Posterior vena cava (tissue), 2 donors: ENCODE measurements at regions of chr5 and their contacts with region 1.

Region 1: DNA sequence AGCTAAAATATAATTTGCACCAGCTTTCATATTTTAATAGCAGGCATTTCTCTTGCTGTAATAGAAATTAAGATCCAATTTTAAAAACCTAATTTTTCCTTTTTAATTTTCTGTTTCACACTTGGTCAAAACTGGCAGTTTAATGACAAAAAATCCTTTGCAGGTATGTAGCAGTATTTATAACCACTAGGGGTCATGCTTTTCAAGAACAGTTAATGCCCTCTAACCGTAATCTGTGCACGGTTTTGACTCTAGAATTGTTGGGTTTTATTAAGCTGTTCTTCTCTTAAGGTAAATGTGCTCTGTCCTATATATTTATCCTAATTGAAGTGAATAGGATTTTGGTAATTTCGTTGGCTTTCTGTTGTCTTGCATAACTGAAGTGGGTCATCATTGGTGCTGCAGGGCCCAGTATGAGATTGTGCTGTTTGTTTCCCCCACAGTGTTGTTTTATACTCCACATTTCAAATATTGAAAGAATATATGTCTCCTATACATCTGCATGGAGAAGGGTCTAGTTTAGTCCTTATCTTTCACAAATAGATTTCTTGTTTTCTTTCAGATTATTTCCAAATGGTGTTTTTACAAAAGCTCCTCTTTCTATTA is 107.4 kb downstream of the SCAMP1 start:
- DNase-seq: no peak

Region 2: GRCh38 chr5:77282337-77283027 is 1185.4 kb before region 1 on chr5:
- intact Hi-C with region 1: no loop called
- DNase-seq: no peak

Region 3: DNA sequence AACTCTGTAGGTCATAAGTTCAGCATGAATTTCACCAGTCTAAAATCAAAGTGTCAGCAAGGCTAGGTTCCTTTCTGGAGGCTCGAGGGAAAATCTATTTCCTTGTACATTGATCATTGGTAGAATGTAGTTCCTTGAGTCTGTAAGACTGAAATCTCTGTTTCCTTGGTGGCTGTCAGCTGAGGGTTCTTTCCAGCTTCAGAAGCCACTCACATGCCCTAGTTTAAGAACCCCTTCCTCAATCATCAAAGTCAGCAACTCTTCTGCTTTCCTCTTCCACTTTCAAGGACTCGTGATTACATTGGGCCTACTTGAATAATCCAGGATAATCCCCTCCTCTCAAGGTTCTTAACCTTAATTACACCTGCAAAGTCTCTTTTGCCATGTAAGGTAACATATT is 112.3 kb before region 1 on chr5:
- intact Hi-C with region 1: no loop called
- DNase-seq: no peak

Region 4: GRCh38 chr5:78416677-78417425 is 51.0 kb before region 1 on chr5:
- intact Hi-C with region 1: no loop called
- DNase-seq: no peak

Region 5: DNA sequence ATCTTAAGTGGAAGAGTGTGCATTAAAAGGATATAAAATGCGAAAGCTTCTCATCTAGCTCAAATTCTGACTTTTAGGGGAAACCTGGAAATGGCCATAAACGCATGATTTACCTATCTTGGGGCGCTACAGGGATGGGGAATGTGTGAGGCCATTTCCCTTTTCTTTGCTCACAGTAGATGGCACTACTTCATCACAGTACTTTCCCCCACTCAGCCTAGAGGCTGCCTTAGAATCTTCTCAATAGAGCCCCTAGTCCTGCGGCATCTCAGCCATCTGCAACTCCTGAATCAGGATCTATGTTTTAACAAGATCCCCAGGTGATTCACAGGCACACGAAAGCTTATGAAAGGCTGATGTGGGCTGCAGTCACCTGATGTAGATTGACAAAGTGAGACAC is 70.0 kb after region 1 on chr5:
- intact Hi-C with region 1: loop called in 1 of 2 experiments (anchors 10 kb)
- DNase-seq: no peak

Region 6: GRCh38 chr5:78731884-78732283 is 264.0 kb after region 1 on chr5:
- intact Hi-C with region 1: no loop called
- DNase-seq: no peak